ENCODE measurements at regions of chr1 and their contacts with region 1.

Region 1: GRCh38 chr1:19460535-19461219 is 24.7 kb downstream of the CAPZB start:
- DNase-seq: no peak
- ATAC-seq: peak; percentile 20; the same call in 1 of the 2 replicates
- H3K4me3 ChIP-seq: no peak overlapping the region
- H3K27ac ChIP-seq: peak overlapping the region; percentile 62
- H3K4me1 ChIP-seq: peaks cover 79% of the 10 kb centered on the region
- H3K27me3 ChIP-seq: no peaks in the 10 kb centered on the region
- CTCF ChIP-seq: no peak

Region 2: DNA sequence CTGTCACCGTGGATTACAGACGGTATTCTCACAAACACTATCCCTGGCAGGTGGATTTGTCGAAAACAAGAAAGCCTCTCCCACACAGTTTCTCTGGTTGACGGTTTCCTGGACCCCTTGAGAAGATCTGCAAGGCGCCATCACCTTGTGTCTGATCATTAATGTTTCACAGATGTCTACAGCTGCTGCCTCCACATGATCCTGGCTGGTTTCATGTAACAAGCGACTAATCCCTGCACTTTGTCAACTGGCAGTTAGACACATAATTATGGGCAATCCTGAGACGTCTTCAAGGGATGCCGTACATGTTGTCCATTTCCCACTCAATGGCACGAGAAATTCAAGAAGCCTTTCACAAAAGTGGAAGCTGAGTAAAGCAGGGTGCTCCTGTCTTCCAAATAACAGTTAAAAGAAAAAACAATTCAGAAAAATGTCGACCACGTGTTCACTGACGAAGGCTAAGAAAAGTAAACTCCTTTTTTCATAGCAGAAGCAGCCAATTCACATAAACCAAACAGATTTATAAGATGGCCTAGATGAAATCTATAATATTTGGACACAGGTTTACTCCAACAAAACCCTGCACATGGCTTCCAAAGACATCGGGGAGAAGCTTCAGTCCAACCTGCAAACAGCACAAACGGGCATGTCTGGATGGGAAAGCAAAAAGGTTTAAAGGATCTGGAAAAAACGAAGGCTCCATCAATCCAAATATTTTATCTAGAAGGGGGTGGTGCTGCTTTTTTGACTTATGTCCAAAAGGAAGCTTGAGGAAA is 27.5 kb before region 1 on chr1:
- CTCF ChIA-PET with region 1: no interaction called
- POLR2A ChIA-PET with region 1: interaction called, 13 read pairs
- in situ Hi-C with region 1: no loop called
- intact Hi-C with region 1: no loop called
- DNase-seq: no peak
- ATAC-seq: no peak
- H3K4me3 ChIP-seq: no peak overlapping the region
- H3K27ac ChIP-seq: peak overlapping the region; percentile 52
- H3K4me1 ChIP-seq: peaks cover 85% of the 10 kb centered on the region
- H3K27me3 ChIP-seq: no peaks in the 10 kb centered on the region
- CTCF ChIP-seq: no peak

Region 3: DNA sequence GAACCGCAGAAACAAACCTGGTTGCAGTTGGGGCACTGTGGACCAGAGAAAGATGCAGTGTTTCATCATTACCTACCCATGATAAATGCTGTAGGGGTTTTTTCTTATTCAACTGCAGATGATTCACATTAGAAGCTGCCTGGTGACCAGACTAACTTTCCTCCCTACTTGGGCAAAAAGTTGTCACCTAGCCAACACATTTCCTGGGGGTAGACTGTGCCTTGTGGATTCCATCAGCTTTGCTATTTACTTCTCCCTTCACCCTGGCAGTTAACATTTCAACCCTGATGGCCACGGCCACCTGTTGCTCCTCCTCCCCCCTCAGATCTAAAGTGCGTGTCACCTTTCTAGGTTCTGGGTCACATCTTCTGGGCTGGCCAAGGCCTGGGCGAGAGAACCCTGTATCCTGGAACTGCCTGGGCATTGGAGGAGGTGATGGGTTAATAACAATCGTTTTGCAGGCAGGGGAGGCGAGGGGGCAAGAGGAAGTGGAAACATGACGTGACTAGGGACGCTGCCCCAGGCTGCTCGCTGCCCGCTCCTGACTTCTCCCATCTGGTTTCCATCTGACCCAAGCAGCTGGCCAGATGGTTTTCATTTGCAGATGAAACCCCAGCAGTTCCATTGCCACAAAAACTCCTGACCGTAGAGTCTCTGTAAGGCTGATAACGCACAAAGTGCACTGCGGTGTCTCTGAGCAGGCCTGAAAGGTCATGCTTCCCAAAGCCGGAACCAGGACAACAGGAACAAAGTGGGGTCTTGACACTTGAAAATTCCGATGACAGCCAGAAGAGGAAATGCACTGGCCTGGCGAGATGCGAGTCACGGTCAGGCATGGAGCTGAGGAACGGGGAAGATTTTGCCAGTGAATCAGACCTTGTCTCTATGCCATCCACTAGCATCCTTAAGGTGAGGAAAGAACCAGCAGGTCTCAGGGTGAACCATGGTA is 11.9 kb before region 1 on chr1:
- CTCF ChIA-PET with region 1: interaction called, 12 read pairs
- POLR2A ChIA-PET with region 1: interaction called, 8 read pairs
- in situ Hi-C with region 1: no loop called
- intact Hi-C with region 1: no loop called
- DNase-seq: no peak
- ATAC-seq: peak; percentile 49
- H3K4me3 ChIP-seq: peak overlapping the region in 1 of 2 experiments; percentile 20; a peak in 2 of 4 replicates
- H3K27ac ChIP-seq: peak overlapping the region; percentile 99
- H3K4me1 ChIP-seq: peaks cover 97% of the 10 kb centered on the region
- H3K27me3 ChIP-seq: no peaks in the 10 kb centered on the region
- CTCF ChIP-seq: no peak

Measured in Panc1 (cell line).